ENCODE measurements at regions of chr7 and their contacts with region 1.

Region 1: DNA sequence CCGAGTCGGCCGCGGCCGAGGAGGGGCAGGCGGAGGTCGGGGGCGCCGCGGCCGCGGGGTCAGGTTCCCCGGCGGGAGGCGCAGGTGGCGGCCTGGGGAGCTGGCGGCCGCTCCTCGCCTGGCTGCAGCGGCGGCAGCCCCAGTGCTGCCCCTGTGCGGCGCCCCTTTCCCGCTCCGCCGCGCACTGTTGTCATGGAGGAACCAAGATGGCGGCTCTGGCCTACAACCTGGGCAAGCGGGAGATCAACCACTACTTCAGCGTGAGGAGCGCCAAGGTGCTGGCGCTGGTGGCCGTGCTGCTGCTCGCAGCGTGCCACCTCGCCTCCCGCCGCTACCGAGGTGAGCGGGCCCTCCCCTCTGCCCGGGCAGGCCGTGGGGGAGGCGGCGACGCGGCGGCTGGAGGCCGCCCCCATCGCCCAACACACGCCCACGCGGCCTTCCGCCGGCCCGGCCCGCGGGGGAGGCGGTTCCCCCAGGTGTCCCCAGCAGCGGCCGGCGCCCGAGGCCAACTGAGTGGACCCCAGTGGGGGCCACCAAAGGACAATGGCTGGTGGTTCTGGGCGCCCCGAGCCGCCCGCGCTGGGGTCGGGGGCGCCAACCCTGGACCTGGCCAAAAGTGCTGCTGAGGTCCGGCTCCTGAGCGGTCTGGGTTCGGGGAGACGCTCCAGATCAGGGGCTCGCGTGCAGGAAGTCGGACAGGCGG is 421 bp downstream of the CASD1 start:
- H3K4me3 Mint-ChIP-seq: peak overlapping the region; percentile 81
- H3K27ac Mint-ChIP-seq: peak overlapping the region; percentile 77
- H3K4me1 Mint-ChIP-seq: peaks cover 6% of the 10 kb centered on the region
- H3K27me3 Mint-ChIP-seq: no peaks in the 10 kb centered on the region

Region 2: GRCh38 chr7:94657771-94658693 is 148.0 kb after region 1 on chr7:
- intact Hi-C with region 1: loop called (anchors 2 kb)
- H3K4me3 Mint-ChIP-seq: peak overlapping the region; percentile 82
- H3K27ac Mint-ChIP-seq: no peak overlapping the region
- H3K4me1 Mint-ChIP-seq: peaks cover 22% of the 10 kb centered on the region
- H3K27me3 Mint-ChIP-seq: peaks cover 29% of the 10 kb centered on the region

Region 3: DNA sequence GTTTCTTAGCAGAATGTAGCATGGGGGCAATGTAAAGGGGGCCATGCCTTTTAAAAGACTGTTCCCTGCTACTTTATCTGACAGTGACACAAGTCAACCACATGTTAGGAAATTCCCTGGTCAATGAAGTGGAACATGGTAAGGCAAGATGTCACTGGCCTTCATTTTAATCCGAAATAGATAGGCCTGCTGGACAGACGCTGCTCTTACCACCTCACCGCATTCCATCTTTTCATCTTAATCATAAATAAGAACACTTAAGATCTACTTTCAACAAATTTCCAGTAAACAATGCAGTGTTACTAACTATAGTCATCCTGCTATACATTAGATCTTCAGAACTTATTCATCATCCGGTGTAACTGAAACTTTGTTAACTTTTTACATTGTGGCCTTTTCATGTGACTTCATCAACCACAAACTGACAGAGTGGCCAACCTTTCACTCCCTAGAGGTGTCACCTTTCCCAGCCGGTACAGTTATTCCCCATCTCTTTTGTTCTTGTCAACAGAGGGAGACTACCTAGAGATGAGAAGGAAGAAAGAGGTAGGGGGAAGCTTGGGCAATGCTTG is 991.3 kb after region 1 on chr7:
- intact Hi-C with region 1: no loop called
- H3K4me3 Mint-ChIP-seq: no peak overlapping the region
- H3K27ac Mint-ChIP-seq: no peak overlapping the region
- H3K4me1 Mint-ChIP-seq: no peaks in the 10 kb centered on the region
- H3K27me3 Mint-ChIP-seq: no peaks in the 10 kb centered on the region